Aorta (tissue), 5 donors: ENCODE measurements at regions of chr7 and their contacts with region 1.

Region 1: DNA sequence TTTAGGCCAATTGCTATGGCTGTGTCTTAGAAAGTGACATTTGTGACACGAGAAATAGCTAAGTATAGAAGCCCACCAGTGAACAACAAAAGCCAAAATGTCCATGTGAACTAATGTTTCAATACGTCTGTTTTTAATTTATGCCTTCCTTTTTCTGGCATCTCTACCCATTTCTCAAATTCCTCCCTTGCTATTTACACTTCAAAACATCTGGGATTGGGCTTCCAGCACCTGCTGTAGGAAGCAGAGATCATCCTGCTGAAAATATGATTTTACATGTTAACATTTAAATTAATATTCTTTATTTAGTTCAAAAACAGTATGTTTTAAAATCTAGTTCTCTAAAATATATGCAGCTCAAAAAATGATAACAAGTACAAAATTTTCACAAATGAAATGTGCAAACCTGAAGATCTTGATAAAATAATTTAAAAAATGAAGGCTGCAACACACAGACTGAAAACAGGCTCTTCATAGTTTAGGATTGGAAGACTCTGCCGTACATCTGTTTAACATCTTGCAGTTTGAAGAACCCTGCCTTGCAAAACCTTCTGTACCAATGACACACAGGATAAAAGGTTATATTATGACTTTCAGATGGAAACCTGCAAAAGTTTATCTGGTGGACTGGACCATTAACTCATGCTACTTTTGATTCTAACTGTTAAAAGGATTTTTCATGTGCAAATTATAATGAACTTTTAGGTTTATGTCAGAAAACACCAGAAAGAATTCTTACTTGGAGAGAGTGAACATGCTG is 408.4 kb downstream of the SUGCT start:
- DNase-seq: no peak
- ATAC-seq: no peak
- H3K4me3 ChIP-seq: no peak overlapping the region
- H3K27ac ChIP-seq: peak overlapping the region; percentile 57 to 59
- H3K4me1 ChIP-seq: peaks cover 1 to 5% of the 10 kb centered on the region in 2 donors
- H3K27me3 ChIP-seq: no peaks in the 10 kb centered on the region

Region 2: DNA sequence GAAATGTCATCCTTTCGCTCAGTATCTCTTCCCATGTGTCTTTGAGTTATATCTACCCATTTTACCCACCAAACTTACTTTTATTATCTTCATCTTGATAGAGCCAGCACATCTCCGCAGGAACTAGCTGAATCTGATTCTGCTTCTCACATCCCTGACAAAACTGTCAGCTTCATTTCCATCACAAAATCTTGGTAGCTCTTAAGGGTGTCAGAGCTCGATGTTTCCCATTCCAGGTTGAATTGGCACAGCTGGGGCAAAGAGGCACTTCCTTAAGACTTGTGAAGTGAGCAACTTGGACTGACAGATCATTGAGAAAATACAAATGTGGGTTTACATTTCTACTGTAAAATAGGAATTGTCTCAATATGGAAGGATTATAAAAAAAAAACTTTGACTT is 26.2 kb after region 1 on chr7:
- intact Hi-C with region 1: loop called in 1 of 2 experiments (anchors 2 kb)
- DNase-seq: no peak
- ATAC-seq: no peak
- H3K4me3 ChIP-seq: no peak overlapping the region
- H3K27ac ChIP-seq: peak overlapping the region in 1 of 2 donors; percentile 8
- H3K4me1 ChIP-seq: peaks cover 4 to 8% of the 10 kb centered on the region in 2 donors
- H3K27me3 ChIP-seq: no peaks in the 10 kb centered on the region

Region 3: GRCh38 chr7:40986351-40986873 is 443.2 kb after region 1 on chr7:
- intact Hi-C with region 1: no loop called
- DNase-seq: no peak
- ATAC-seq: peak; percentile 52
- H3K4me3 ChIP-seq: no peak overlapping the region
- H3K27ac ChIP-seq: no peak overlapping the region
- H3K4me1 ChIP-seq: peaks cover 5 to 7% of the 10 kb centered on the region in 2 donors
- H3K27me3 ChIP-seq: no peaks in the 10 kb centered on the region